ENCODE measurements at regions of chr15 and their contacts with region 1.

Region 1: DNA sequence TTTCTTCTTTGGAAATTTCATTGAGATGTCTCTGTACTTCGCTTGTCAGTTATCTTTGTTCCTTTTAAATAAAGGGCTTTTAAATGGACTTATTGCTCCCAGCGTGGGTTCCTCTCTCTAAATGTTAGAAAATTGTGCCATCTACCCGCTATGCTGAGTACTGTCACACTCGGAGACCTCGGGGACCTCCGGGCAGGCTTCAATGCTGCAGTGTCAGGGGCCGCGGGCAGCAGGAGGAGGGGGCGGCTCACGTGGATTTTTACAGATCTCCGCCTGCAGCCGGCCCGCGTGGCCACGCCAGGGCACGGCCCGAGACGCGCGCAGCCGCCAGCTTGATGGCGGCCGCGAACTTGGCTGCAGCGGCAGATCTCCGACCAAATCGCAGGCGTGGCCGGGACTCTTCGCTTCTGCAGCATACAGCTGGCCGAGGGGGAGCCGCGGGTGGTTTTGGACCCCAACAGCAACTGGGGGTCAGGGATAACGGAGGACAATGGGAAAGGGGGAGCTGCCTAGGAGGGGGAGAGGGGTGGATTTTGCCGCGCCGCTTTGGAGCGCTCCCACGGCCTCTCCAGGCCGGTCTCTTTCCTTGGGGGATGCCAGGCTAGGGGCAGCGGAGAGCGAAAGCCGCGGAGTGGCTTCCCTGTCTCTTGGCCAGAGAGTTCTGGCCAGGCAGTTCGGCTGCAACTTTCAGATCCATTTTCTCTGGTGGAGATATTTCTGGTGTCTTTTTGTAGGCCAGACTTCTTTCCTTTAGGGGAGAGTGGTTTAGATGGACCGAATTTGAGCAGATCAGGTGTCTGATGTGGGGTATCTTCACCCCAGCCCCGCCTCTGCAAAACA is 15.3 kb downstream of the NR2F2 start:
- DNase-seq: peak; percentile 73
- H3K4me3 Mint-ChIP-seq: no peak overlapping the region
- H3K27ac Mint-ChIP-seq: no peak overlapping the region
- H3K4me1 Mint-ChIP-seq: no peaks in the 10 kb centered on the region
- H3K27me3 Mint-ChIP-seq: peaks cover 94% of the 10 kb centered on the region

Region 2: GRCh38 chr15:95259513-95259912 is 1086.3 kb before region 1 on chr15:
- intact Hi-C with region 1: loop called (anchors 1 kb)
- DNase-seq: peak; percentile 88
- H3K4me3 Mint-ChIP-seq: no peak overlapping the region
- H3K27ac Mint-ChIP-seq: no peak overlapping the region
- H3K4me1 Mint-ChIP-seq: peaks cover 10% of the 10 kb centered on the region
- H3K27me3 Mint-ChIP-seq: peaks cover 64% of the 10 kb centered on the region

Region 3: DNA sequence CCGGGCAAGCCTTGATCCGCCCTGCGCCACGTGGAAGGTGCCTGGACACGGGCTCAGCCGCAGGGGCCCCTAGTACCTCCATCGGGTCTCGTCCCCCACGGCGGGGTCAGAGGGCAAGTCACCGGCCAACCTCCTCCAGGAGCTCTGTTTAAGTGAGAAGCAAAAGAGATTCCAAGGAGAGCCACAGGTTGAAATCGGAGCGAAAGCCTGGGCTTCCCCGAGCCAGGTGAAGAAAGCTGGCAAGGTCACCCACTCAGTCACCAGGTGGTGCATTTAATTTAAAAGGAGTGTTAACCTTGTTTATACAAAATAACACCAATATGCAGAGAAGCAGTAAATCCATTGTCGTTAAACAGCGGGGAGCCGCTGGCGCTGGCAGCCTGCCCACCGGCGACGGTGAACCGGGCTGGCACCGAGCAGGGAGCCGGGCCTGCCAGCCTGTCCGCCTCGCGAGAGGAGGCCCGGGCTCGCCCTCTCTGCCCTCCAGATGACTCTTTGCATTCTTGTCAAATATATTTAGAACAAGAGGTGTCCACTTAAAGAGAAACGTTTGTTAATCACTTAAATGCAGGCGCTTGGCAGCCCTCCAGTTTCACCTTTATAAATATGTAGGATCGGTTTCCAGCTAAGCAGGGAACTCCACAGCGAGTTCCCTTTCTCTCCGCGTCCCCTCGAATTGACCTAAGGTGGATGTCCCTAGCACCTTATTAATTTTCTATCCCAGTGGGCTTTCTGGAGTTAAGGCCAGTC is 292.6 kb before region 1 on chr15:
- intact Hi-C with region 1: loop called (anchors 10 kb)
- DNase-seq: no peak
- H3K4me3 Mint-ChIP-seq: peak overlapping the region; percentile 34
- H3K27ac Mint-ChIP-seq: no peak overlapping the region
- H3K4me1 Mint-ChIP-seq: peaks cover under 1% of the 10 kb centered on the region
- H3K27me3 Mint-ChIP-seq: peaks cover 48% of the 10 kb centered on the region

Region 4: DNA sequence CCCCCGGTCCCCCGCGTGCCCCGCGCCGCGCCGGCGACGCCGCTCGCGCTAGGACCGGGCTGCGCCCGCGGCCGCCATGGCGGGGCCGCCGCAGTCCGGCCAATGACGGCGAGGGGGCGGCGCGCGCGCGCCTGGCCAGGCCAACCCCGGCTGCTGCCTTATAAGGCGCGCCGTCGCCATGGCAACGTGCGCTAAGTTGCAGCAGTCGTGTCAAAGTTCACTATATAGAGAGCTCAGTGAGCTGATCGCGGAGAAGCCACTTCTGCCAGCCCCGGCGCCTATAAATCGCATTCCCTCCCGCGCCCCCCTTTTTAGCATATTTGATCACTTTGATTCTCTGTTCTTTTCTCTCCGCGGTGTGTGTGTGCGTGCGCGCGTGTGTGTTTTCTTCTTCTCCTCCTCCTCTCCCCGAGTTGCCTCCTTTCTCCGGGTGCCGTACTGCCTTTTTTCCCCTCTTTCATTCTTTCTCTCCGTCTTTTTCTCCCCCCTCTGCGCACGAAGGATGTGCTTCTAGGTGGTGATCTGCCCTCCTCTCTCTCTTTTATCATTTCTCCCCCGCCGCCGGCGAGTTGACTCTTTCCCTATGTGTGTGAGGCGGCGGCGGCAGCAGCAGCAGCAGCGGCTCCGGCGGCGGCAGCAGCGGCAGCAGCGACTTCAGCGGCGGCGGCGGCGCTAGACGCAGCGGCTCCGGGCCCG is 15.2 kb before region 1 on chr15 and contains the start of gene NR2F2:
- intact Hi-C with region 1: loop called (anchors 2 kb)
- DNase-seq: peak; percentile 84
- H3K4me3 Mint-ChIP-seq: peak within 1 kb of the TSS; percentile 89
- H3K27ac Mint-ChIP-seq: peak within 1 kb of the TSS; percentile 80
- H3K4me1 Mint-ChIP-seq: peaks cover 4% of the 10 kb centered on the region
- H3K27me3 Mint-ChIP-seq: peaks cover 78% of the 10 kb centered on the region
- total RNA-seq, gene NR2F2: not detected in 2 replicates

Region 5: GRCh38 chr15:96362755-96363651 is 17.2 kb after region 1 on chr15:
- intact Hi-C with region 1: loop called (anchors 2 kb)
- DNase-seq: no peak
- H3K4me3 Mint-ChIP-seq: no peak overlapping the region
- H3K27ac Mint-ChIP-seq: peak overlapping the region; percentile 3
- H3K4me1 Mint-ChIP-seq: peaks cover 3% of the 10 kb centered on the region
- H3K27me3 Mint-ChIP-seq: peaks cover 80% of the 10 kb centered on the region

Region 6: GRCh38 chr15:96416934-96417759 is 71.4 kb after region 1 on chr15:
- intact Hi-C with region 1: loop called (anchors 2 kb)
- DNase-seq: peak; percentile 56
- H3K4me3 Mint-ChIP-seq: no peak overlapping the region
- H3K27ac Mint-ChIP-seq: no peak overlapping the region
- H3K4me1 Mint-ChIP-seq: peaks cover 3% of the 10 kb centered on the region
- H3K27me3 Mint-ChIP-seq: peaks cover 77% of the 10 kb centered on the region

Measured in activated CD4-positive, alpha-beta T cell treated with anti-CD3 and anti-CD28 coated beads, Interleukin-2, amount 10 ng/mL, durations not matched to agents 24 days and 14 days (primary cell).